Panc1 (cell line): ENCODE measurements at regions of chr12 and their contacts with region 1.

Region 1: GRCh38 chr12:40152783-40153383 is 47.0 kb upstream of the SLC2A13 start:
- DNase-seq: peak; percentile 13
- ATAC-seq: no peak
- H3K4me3 ChIP-seq: no peak overlapping the region
- H3K27ac ChIP-seq: no peak overlapping the region
- H3K4me1 ChIP-seq: no peaks in the 10 kb centered on the region
- H3K27me3 ChIP-seq: no peaks in the 10 kb centered on the region; the same call in none of the 2 replicates
- CTCF ChIP-seq: peak; percentile 83; the same call in 1 of the 2 replicates

Region 2: DNA sequence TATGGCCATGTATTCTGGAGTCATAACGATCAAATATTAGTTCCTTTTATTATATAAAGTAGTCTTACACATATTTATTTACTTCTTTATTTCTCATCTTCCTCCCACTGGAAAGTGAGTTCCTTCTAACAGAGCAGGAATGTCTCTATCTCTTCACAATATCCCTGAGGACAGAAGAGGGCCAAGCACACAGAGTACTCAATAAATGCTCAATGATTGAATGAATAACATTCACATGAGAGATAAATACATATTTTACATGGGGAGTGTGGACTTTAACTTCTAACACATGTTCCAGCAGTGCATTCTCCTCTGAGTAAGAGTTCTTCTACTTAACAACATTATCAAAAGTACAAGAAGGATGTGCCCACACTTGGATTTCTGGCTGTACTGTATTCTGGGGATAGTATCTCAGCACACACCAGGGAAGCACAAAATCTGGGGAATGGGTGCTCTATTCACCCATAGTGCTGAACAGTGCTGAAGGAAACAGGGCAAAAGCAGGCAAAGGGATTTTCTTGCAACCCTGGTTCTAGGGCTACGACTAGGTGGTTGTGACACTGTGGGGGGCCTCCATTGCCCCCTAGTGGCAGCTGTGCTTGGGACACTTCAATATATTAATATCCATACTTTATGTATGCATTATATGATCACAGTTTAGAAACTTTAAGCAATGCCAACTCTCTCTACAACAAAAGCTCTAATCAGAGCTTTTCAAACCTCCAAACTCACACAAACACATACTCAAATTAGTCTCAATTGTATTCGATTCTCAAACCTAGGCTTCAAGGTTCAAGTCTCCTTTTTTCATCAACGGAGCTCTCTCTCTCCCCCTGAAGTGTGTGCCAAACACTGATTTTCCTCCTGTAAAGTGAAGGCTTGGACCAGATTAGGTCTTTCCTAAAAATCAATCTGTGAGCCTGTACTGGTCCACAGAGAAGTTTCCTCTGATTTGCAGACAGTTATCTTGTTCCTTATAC is 162.5 kb before region 1 on chr12:
- CTCF ChIA-PET with region 1: no interaction called
- POLR2A ChIA-PET with region 1: no interaction called
- in situ Hi-C with region 1: no loop called
- intact Hi-C with region 1: no loop called
- DNase-seq: peak; percentile 12
- ATAC-seq: peak; percentile 87
- H3K4me3 ChIP-seq: no peak overlapping the region
- H3K27ac ChIP-seq: no peak overlapping the region
- H3K4me1 ChIP-seq: no peaks in the 10 kb centered on the region
- H3K27me3 ChIP-seq: no peaks in the 10 kb centered on the region
- CTCF ChIP-seq: peak; percentile 89

Region 3: DNA sequence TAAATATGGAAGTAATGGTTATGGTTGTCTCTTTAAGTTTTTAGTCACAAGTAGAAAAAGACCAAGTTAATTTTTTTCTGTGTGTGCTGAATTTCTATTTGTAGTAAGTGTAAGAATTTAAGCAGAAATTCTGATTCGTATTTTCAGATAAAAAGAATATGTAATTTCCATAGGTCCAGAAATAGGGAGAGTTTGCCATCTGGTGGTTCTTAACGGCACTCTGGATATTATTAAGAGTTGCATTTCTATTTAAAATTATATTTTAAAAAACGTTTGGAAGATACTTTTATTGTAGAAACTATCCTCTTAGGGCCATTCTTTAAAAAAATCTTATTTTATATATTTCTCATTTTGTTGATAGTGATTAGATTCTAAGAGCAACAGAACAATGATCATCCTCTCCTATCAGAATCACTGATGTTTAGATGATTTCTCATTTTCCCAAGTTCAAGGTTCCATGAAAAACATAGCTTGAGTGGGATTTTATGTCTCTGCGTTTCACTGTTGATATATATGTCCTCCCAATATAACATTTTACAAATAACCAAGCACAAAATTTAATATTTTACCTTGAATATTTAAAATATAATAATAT is 160.2 kb after region 1 on chr12:
- CTCF ChIA-PET with region 1: no interaction called
- POLR2A ChIA-PET with region 1: no interaction called
- in situ Hi-C with region 1: no loop called
- intact Hi-C with region 1: loop called (anchors 1 kb)
- DNase-seq: no peak
- ATAC-seq: no peak
- H3K4me3 ChIP-seq: no peak overlapping the region
- H3K27ac ChIP-seq: no peak overlapping the region
- H3K4me1 ChIP-seq: no peaks in the 10 kb centered on the region
- H3K27me3 ChIP-seq: no peaks in the 10 kb centered on the region
- CTCF ChIP-seq: peak; percentile 57; the same call in 1 of the 2 replicates